ENCODE measurements at regions of chr6 and their contacts with region 1.

Region 1: DNA sequence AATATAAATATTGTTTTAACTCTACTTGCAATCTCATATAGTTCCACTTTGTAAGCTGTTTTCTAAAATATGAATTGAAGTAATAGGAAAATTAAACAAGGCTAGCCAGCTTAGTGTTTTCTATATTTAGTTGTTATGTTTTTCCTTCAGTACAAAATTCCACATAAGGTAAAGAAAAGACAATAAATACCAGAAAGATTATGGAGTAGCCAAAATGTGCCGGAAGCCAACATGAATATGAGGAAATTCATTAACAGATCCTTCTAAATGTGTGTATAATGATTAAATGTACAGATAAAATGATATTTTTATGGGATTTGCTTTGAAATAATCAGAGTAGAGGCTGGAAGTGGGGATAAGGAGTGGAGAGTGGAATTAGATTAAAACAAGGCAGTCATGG is 52.5 kb upstream of the COL21A1 start:
- DNase-seq: no peak
- H3K4me3 ChIP-seq: no peak overlapping the region
- CTCF ChIP-seq: no peak
- POLR2A ChIP-seq: no peak

Region 2: GRCh38 chr6:56314683-56315523 is 15.0 kb after region 1 on chr6:
- intact Hi-C with region 1: loop called (anchors 1 kb)
- DNase-seq: no peak
- H3K4me3 ChIP-seq: no peak overlapping the region
- CTCF ChIP-seq: no peak
- POLR2A ChIP-seq: no peak

Measured in lower leg skin (tissue), 4 donors.